Activated naive CD8-positive, alpha-beta T cell treated with anti-CD3 and anti-CD28 coated beads, Interleukin-2, amount 10 ng/mL, durations not matched to agents 7 days and 5 days (primary cell): ENCODE measurements at regions of chr1 and their contacts with region 1.

Region 1: DNA sequence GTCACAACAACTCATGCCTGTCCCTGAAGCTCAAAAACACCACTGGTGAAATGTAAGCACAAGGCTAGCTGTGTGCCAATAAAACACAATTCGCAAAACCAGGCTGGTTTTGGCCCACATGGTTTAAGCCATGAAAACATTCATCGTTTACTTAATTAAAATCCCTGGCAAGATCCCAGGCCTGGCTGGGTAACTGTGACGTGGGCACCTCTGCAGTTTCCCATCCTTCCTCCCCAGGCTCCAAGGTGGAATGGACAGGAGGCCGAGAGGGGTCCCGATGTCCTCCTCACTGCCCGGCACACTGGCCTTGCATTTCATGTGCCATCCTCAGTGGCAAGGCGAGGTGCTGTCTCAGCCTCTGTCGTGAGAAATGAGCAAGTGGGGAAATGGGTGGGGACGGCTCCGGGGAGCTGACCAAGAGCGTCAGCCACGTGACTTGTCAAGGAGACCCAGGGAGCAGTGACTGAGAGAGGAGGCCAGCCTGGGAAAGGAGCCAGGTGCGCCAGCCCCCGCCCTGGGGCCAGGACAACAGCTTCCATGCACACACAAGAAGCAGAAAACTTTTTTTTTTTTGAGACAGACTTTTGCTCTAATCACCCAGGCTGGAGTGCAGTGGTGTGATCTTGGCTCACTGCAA is 153.1 kb upstream of the RAB4A start:
- DNase-seq: no peak
- ATAC-seq: no peak
- H3K4me3 Mint-ChIP-seq: no peak overlapping the region
- H3K27ac Mint-ChIP-seq: no peak overlapping the region
- H3K4me1 Mint-ChIP-seq: peaks cover 7% of the 10 kb centered on the region
- H3K27me3 Mint-ChIP-seq: peaks cover 7% of the 10 kb centered on the region

Region 2: DNA sequence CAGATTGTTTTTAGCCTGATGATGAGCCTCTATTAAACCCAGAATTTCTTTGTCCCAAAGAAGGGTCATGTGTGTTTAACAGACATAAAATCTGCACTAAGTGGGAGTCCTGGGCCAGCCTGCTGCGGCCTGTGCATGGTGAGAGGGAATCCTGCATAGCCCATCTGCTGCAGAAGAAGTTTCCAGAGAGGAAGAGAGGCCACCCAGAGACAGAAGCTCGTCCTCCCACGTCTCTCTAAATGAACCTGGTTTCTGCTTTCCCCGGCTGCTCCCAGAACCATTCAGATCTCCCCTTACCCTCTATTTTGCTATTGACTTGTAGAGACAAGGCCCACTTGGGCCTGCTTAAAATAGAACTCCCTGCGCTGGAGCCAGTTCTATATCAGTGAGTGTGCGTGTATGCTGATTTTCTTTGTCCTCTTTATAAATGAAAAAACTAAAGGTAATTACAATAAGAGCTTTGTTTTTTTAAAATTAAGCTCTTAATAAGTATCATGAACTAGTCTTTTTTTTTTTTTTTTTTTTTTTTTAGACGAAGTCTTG is 10.4 kb after region 1 on chr1:
- POLR2A ChIA-PET with region 1: interaction called, 10 read pairs
- DNase-seq: no peak
- ATAC-seq: no peak
- H3K4me3 Mint-ChIP-seq: no peak overlapping the region
- H3K27ac Mint-ChIP-seq: no peak overlapping the region
- H3K4me1 Mint-ChIP-seq: peaks cover 43% of the 10 kb centered on the region
- H3K27me3 Mint-ChIP-seq: peaks cover 14% of the 10 kb centered on the region

Region 3: DNA sequence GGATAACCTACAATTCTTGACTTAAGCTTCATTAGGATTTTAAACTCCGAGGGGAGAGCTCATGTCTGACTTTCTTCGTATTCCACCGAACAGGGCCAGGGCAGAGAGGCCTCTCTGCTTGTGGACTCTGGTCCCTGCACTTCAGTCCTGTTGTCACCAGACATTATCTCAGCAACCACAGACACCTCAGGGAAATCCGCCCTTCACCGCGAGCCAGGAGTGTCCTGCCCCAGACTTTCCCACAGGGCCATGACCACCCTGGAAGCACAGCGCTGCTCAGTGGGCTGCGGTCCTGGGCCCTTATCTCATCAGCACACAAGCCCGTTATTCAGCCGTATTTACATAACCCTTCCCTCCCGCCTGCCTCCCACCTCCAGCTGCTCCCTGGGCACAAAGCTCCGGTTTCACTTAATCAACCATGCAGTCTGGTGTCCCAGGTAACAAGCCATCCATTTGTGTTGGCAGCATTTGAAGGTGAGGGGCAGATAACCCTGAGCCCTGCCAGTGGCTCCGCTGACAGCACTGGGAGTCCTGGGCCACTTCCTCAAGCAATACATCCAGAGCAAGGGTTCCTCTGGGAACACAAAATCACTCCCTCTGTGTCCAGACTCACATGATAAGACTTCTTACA is 30.4 kb after region 1 on chr1:
- POLR2A ChIA-PET with region 1: no interaction called
- DNase-seq: no peak
- ATAC-seq: no peak
- H3K4me3 Mint-ChIP-seq: no peak overlapping the region
- H3K27ac Mint-ChIP-seq: no peak overlapping the region
- H3K4me1 Mint-ChIP-seq: peaks cover 1% of the 10 kb centered on the region
- H3K27me3 Mint-ChIP-seq: no peaks in the 10 kb centered on the region

Region 4: GRCh38 chr1:229158341-229158921 is 40.6 kb after region 1 on chr1:
- POLR2A ChIA-PET with region 1: no interaction called
- DNase-seq: no peak
- ATAC-seq: no peak
- H3K4me3 Mint-ChIP-seq: no peak overlapping the region
- H3K27ac Mint-ChIP-seq: no peak overlapping the region
- H3K4me1 Mint-ChIP-seq: peaks cover 19% of the 10 kb centered on the region
- H3K27me3 Mint-ChIP-seq: peaks cover 2% of the 10 kb centered on the region